ENCODE measurements at regions of chr11 and their contacts with region 1.

Region 1: DNA sequence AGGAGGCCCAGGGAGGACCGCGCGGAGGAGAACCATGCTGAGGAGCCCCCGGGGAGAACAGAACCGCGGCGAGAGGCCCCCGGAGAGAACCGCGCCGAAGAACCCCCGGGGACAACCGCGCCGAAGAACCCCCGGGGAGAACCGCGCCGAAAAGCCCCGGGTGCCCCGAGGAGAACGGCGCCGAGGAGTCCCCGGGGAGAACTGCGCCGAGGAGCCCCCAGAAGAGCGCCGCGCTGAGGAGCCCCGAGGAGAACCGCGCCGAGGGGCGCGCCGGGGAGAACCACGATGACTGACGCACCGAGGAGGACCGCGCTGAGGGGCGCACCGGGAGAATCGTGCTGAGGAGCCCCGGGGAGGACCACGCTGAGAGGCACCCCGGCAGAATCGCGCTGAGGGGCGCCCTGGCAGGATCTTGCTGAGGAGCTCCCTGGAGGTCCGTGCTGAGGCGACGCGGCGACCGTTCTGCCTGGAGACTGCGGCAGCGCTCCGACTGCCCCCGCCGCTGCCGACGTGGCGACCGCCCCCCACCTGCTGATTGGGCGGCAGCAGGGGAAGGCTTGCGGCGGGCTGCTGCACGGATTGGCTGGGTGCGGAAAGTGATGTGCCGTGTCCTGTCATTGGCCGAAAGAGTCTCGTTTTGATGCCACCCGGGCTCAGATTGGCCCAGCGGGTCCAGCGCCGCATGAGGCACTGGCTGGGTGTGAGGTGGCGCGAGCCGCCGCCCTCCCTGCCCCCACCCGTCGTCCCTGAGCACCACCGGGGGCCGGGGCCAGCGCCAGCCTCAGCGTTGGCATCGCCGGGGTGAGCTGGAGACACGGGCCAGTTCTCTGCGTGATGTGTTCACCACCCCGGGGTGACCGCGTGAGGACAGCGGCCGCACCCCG is at the start of gene KCNQ1OT1:
- DNase-seq: peak; percentile 91 to 93 (median 92)
- ATAC-seq: peak; percentile 94 to 97 (median 96)
- H3K4me3 ChIP-seq: peak within 1 kb of the TSS; percentile 53 to 94 (median 74)
- H3K27ac ChIP-seq: peak within 1 kb of the TSS; percentile 84 to 97 (median 92)
- H3K4me1 ChIP-seq: peaks cover 0 to 32% (median 14%) of the 10 kb centered on the region in 12 donors
- H3K27me3 ChIP-seq: no peaks in the 10 kb centered on the region
- CTCF ChIP-seq: no peak
- POLR2A ChIP-seq: peak; percentile 69 to 96
- total RNA-seq, gene KCNQ1OT1: 0.28 to 0.93 (median 0.40) TPM

Region 2: DNA sequence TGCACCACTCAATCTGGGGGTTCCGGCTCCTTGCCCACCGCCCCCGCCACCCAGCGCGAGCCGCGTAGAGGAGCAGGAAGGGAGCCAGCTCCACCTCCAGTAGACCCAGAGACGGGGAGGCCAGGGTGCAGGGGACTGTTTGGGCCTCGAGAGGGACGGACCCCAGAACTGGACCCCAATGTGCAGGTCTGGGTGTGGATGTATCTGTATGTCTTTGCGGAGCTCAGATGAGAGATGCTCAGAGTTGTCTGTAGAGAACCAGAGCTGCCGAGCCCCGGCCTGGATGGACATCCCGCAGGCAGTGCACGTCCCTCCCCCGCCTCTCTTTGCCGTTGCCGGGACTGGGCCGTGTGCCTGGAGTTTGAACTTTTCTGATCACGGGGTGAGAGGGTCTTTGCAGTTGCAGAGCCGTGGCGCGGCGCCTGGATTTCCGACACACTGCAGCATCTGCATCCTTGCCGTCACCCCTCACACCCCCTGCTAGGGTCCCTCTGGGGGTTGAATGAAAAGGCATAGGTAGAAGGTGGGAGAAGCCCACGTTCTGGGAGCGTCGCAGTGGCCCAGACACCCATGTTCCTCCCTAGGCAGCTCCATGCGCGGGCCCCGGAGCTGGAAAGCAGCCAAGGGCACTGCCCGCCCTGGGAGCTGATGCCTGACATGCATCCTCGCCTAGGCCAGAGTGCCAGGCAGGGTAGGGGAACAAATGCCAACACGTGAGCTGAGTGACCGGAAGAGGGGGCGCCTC is 149.7 kb before region 1 on chr11:
- intact Hi-C with region 1: loop called in 1 of 10 experiments (anchors 10 kb)
- DNase-seq: peak in 4 of 5 donors; percentile 52 to 77 (median 65)
- ATAC-seq: peak; percentile 38 to 84 (median 82)
- H3K4me3 ChIP-seq: no peak overlapping the region
- H3K27ac ChIP-seq: no peak overlapping the region
- H3K4me1 ChIP-seq: peaks cover 0 to 12% (median 0%) of the 10 kb centered on the region in 12 donors
- H3K27me3 ChIP-seq: no peaks in the 10 kb centered on the region
- CTCF ChIP-seq: no peak
- POLR2A ChIP-seq: no peak

Region 3: DNA sequence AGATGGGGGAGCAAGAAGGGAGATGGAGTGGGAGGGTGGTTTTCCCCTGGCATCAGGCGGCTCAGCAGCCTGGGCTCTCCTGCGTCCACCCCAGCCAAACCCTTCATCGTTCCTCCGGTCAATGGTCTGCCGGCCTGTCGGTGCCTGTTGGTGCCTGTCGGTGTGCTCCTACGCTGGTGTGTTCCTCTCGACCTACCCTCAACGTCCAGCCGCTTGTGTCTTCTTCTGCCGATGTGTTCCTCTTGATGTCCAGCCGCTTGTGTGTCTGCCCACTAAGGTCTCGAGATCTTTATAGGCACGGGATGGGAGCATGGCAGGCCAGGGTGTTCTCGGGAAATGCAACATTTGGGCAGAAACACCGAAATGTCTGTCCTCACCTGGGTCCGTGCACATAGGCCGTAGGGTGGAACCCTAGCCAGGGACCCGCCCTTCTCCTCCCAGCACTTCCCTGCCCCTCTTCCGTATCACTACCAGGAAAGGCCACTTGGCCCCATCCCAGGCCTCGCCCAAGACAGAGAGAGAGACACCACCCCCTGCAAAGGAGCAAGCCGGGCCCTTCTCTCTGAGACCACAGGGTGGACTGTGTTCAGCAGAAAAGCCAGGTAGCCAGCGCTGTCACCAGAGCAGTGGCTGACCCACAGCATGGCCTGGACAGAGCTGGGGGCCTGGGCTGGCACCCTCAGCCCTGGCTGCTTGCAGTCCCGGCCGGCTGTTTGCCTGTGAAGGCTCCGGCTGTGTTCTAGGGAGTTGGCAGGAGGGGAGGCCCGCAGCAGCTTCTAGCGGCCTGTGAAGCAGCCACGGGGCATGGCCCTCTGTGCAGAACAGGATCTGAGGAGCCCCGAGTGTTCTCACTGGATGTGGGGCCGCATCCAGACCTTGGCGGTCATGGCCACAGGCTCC is 61.6 kb after region 1 on chr11:
- intact Hi-C with region 1: no loop called
- DNase-seq: peak in 4 of 5 donors; percentile 5 to 40 (median 16)
- ATAC-seq: peak in 1 of 4 donors; percentile 35
- H3K4me3 ChIP-seq: no peak overlapping the region
- H3K27ac ChIP-seq: no peak overlapping the region
- H3K4me1 ChIP-seq: peaks cover 0 to 4% (median 0%) of the 10 kb centered on the region in 12 donors
- H3K27me3 ChIP-seq: no peaks in the 10 kb centered on the region
- CTCF ChIP-seq: no peak
- POLR2A ChIP-seq: no peak

Region 4: GRCh38 chr11:2778630-2779498 is 79.1 kb after region 1 on chr11:
- intact Hi-C with region 1: loop called in 1 of 10 experiments (anchors 5 kb)
- DNase-seq: peak; percentile 80 to 94 (median 83)
- ATAC-seq: peak; percentile 86 to 91 (median 88)
- H3K4me3 ChIP-seq: peak overlapping the region in 5 of 12 donors; percentile 20 to 37 (median 32)
- H3K27ac ChIP-seq: peak overlapping the region; percentile 63 to 99 (median 90)
- H3K4me1 ChIP-seq: peaks cover 20 to 49% (median 41%) of the 10 kb centered on the region in 12 donors
- H3K27me3 ChIP-seq: no peaks in the 10 kb centered on the region
- CTCF ChIP-seq: peak in 9 of 12 donors; percentile 16 to 46 (median 35)
- POLR2A ChIP-seq: no peak

Region 5: DNA sequence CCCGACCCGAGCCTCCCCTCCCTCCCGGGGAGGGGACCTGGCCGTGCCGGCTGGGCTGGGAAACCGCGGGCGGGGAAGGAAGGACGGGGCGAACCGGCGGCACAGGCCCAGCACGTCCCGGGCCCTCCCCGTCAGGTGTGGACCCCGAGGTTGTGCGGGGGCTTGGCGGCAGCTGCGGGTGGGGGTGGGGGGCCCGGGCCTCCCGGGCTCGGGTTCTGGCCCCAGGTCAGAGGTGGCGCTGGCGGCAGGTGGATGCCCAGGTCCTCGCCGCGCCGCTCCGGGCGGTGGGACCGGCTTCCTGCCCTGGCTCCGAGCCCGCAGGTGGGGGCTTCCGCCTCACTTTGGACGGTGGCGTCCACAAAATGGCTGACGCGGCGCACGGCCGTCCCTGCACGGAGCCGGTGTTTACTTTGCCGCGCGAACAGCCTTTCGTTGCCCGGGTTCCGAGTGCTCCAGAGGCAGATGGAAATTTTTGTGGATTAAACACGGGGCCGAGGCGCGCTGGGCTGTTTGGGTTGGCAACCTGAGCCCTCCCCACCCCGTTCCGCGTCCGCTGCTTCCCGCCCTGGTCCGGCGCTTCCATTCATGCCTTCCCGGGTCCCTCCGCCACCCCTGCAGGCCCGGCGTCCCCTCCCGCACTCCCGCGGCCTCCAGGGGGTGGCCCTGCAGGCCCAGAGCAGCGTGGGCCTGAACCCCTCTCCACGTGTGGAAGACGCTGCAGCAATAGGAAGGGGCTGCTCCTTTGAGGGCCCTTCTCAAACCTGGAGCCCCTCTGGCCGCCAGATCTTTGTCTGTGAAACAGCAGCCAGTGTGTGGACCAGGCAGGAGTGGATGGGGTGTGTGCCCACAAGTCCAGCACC is 92.0 kb after region 1 on chr11:
- intact Hi-C with region 1: loop called in 1 of 10 experiments (anchors 5 kb)
- DNase-seq: peak; percentile 29 to 63 (median 32)
- ATAC-seq: peak in 2 of 4 donors; percentile 9 to 38
- H3K4me3 ChIP-seq: peak overlapping the region; percentile 5 to 61 (median 52)
- H3K27ac ChIP-seq: peak overlapping the region in 10 of 12 donors; percentile 14 to 67 (median 43)
- H3K4me1 ChIP-seq: peaks cover 0 to 19% (median 4%) of the 10 kb centered on the region in 12 donors
- H3K27me3 ChIP-seq: no peaks in the 10 kb centered on the region
- CTCF ChIP-seq: peak in 2 of 12 donors; percentile 3 to 8
- POLR2A ChIP-seq: no peak